Posterior vena cava (tissue), 2 donors: ENCODE measurements at regions of chr11 and their contacts with region 1.

Region 1: DNA sequence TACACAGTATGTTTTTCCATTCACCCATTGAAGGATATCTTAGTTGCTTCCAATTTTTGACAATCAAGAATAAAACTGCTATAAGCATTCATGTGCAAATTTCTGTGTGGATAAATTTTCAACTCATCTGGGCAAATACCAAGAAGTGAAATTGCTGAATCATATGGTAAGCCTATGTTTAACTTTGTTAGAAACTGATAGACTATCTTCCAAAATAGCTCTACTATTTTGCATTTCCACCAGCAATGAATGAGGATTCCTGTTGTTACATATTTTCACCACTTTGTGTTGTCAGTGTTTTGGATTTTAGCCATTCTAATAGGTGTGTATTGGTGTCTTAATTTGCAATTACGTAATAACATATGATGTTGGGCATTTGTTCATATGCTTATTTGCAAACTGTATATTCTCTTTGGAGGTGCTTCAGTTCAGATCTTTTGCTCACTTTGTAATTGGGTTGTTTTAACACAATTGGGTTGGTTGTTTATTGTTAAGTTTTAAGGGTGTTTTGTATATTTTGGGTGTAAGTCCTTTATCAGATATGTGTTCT is 49.2 kb upstream of the FAM181B start:
- DNase-seq: no peak

Region 2: GRCh38 chr11:82174610-82175009 is 608.3 kb before region 1 on chr11:
- intact Hi-C with region 1: loop called in 1 of 2 experiments (anchors 5 kb)
- DNase-seq: no peak